Activated naive CD4-positive, alpha-beta T cell treated with anti-CD3 and anti-CD28 coated beads for 36 hours (primary cell): ENCODE measurements at regions of chr6 and their contacts with region 1.

Region 1: DNA sequence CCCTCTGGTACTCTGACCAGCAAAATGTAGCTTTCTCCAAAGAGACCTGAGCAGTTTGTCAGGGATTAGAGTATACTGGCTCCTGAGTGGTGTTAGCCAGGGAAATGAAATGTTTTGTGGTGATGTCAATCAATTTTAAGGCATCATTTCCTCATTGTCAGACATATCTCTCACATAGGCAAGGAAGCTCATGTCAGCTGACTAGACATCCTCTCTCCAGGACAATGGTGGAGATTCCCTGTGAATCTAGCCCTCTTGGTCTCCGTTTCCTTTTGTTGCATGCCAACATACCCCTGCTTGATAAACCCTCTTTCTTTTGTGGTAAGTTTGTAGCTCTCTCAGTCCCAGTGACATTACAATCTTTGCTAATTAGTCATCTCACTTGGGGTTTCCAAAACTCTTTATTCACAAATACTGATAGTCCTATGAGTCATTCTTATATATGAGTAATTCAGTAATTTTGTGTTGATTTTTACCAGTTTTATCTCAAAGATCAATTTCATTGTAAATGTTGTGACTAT is 135.6 kb upstream of the PTPRK start:
- DNase-seq: peak; percentile 50
- H3K4me3 Mint-ChIP-seq: no peak overlapping the region
- H3K27ac Mint-ChIP-seq: peak overlapping the region; percentile 69
- H3K4me1 Mint-ChIP-seq: peaks cover 31% of the 10 kb centered on the region
- H3K27me3 Mint-ChIP-seq: peaks cover under 1% of the 10 kb centered on the region

Region 2: GRCh38 chr6:127570739-127571389 is 1085.2 kb before region 1 on chr6:
- CTCF ChIA-PET with region 1: no interaction called
- intact Hi-C with region 1: loop called (anchors 2 kb)
- DNase-seq: no peak
- H3K4me3 Mint-ChIP-seq: no peak overlapping the region
- H3K27ac Mint-ChIP-seq: no peak overlapping the region
- H3K4me1 Mint-ChIP-seq: peaks cover 19% of the 10 kb centered on the region
- H3K27me3 Mint-ChIP-seq: no peaks in the 10 kb centered on the region

Region 3: GRCh38 chr6:127971945-127972391 is 684.1 kb before region 1 on chr6:
- CTCF ChIA-PET with region 1: no interaction called
- intact Hi-C with region 1: loop called (anchors 5 kb)
- DNase-seq: peak; percentile 62
- H3K4me3 Mint-ChIP-seq: peak overlapping the region; percentile 72
- H3K27ac Mint-ChIP-seq: peak overlapping the region; percentile 88
- H3K4me1 Mint-ChIP-seq: peaks cover 63% of the 10 kb centered on the region
- H3K27me3 Mint-ChIP-seq: no peaks in the 10 kb centered on the region

Region 4: DNA sequence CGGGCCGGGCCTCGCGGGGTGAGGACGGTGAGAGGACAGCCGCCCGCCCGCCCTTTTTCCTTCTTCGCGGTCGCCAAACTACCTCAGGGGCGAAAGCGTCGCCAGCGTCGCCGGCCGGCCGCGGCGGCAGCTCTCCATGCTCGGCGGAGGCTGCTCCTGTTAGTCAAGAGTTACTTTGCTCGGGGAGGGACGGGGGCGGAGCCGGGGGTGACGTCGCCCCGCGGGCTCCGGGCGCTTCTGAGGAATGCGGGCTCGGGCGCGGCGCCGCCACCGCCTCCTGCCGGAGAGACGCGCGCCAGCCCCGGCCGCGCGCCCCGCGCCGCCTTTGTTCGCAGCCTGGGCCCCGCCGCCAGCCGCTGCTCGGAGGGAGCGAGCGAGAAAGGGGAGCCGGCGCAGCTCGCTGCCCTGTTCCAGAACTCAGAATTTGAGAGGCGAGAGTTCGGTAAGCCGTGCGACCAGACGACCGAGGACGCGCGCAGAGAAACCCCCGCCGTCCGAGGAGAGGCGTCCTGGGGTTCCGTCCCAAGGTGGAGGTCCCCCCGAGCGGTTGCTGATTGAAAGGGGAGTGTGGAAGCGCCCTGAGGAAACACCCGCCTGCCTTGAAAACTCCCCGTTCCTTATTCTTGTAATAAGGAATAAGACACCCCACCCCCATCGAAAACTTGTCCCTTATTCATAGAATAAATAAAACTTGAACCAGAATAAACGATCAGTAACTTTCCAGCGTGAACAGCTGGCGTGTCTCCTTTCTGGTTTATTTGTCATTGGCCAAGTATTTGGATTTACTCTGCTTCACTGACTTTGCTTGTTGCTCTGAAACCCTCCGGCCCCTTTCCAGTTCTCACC is 135.4 kb before region 1 on chr6 and contains the start of gene PTPRK:
- CTCF ChIA-PET with region 1: no interaction called
- intact Hi-C with region 1: loop called (anchors 1 kb)
- DNase-seq: peak; percentile 92
- H3K4me3 Mint-ChIP-seq: peak within 1 kb of the TSS; percentile 91
- H3K27ac Mint-ChIP-seq: peak within 1 kb of the TSS; percentile 63
- H3K4me1 Mint-ChIP-seq: peaks cover 8% of the 10 kb centered on the region
- H3K27me3 Mint-ChIP-seq: peaks cover 34% of the 10 kb centered on the region
- total RNA-seq, gene PTPRK: 5.5 to 8.0 TPM

Region 5: DNA sequence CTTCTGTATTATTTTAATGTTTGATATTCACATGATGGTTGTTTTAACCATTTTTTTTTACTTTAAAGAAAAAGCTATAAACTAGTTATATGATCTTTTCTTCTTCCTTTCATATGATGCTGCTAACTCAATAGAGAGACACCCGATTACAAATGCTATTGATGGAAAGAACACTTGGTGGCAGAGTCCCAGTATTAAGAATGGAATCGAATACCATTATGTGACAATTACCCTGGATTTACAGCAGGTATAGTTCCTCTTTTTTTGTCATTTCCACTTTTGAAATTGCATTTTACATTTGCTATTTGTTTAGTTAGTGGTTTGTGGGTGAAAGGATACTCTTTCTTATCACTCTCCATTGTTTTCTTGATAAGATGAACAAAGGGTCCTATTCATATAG is 403.6 kb after region 1 on chr6:
- CTCF ChIA-PET with region 1: no interaction called
- intact Hi-C with region 1: no loop called
- DNase-seq: no peak
- H3K4me3 Mint-ChIP-seq: no peak overlapping the region
- H3K27ac Mint-ChIP-seq: no peak overlapping the region
- H3K4me1 Mint-ChIP-seq: no peaks in the 10 kb centered on the region
- H3K27me3 Mint-ChIP-seq: peaks cover 9% of the 10 kb centered on the region

Region 6: DNA sequence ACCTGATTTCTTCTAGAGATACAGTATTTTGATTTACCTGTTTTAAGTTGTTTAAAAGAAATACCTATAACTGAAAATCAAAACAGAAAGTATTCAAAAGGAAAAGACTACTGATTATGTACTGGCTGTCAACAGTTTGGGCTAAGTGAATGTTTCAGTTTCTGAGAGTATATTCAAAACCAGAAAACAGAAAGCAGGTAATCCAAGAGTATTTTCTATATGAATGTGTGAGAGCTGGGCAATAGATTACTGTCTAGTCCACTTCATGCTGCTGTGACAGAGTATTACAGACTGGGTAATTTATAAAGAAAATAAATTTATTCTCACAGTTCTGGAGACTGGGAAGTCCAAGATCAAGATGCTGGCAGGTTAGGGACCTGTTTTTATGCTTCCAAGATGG is 792.9 kb after region 1 on chr6:
- CTCF ChIA-PET with region 1: no interaction called
- intact Hi-C with region 1: loop called (anchors 1 kb)
- DNase-seq: no peak
- H3K4me3 Mint-ChIP-seq: no peak overlapping the region
- H3K27ac Mint-ChIP-seq: peak overlapping the region; percentile 37
- H3K4me1 Mint-ChIP-seq: peaks cover 80% of the 10 kb centered on the region
- H3K27me3 Mint-ChIP-seq: no peaks in the 10 kb centered on the region

Region 7: GRCh38 chr6:129672881-129673643 is 1017.0 kb after region 1 on chr6:
- CTCF ChIA-PET with region 1: no interaction called
- intact Hi-C with region 1: loop called (anchors 10 kb)
- DNase-seq: peak; percentile 27
- H3K4me3 Mint-ChIP-seq: peak overlapping the region; percentile 63
- H3K27ac Mint-ChIP-seq: peak overlapping the region; percentile 71
- H3K4me1 Mint-ChIP-seq: peaks cover 32% of the 10 kb centered on the region
- H3K27me3 Mint-ChIP-seq: no peaks in the 10 kb centered on the region